ENCODE measurements at regions of chr7 and their contacts with region 1.

Region 1: GRCh38 chr7:102390697-102391484 is 5.3 kb upstream of the PRKRIP1 start:
- H3K4me3 Mint-ChIP-seq: no peak overlapping the region
- H3K27ac Mint-ChIP-seq: no peak overlapping the region
- H3K4me1 Mint-ChIP-seq: peaks cover 6% of the 10 kb centered on the region
- H3K27me3 Mint-ChIP-seq: no peaks in the 10 kb centered on the region

Region 2: GRCh38 chr7:102195361-102196036 is 195.4 kb before region 1 on chr7:
- intact Hi-C with region 1: no loop called
- H3K4me3 Mint-ChIP-seq: no peak overlapping the region
- H3K27ac Mint-ChIP-seq: no peak overlapping the region
- H3K4me1 Mint-ChIP-seq: peaks cover 9% of the 10 kb centered on the region
- H3K27me3 Mint-ChIP-seq: no peaks in the 10 kb centered on the region

Region 3: DNA sequence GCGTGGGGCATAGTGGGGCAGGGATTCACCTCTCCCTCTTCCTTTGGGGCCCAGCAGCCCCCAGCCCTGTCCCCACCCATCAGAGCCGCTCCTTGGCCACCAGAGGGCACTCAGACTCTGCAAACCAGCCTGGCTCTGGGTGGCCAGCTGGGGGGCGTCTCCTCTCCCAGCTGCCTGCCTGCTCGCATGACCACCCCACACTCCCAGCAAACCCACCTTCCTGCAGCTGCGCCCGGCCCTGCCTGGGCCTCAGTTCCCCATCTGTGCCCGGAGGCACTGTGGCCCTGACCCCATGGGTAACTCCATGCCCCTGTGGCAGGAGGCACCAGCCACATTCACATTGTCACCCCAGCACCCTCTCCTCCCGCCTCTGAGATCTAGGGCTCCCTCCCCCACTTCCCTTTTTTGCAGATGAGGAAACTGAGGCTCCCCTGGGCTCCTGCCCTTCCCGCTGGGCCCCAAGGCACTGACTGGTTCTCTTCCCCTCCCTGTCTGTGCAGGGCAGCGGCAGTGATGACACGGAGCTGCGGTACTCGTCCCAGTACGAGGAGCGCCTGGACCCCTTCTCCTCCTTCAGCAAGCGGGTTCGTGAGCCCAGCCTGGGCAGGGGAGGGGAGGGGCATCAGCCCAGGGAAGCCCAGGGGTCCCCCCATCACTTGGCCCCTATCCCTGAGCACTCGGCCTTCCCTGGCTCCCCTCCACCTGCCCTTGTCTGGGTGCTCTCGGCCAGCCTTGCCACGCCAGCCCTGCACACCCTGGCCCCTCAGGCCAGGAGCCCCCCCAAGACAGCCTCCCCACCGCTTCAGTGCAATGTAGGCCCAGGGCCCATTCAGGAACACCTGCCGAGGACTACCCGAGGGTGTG is 111.1 kb before region 1 on chr7:
- intact Hi-C with region 1: loop called (anchors 1 kb)
- H3K4me3 Mint-ChIP-seq: peak overlapping the region; percentile 35
- H3K27ac Mint-ChIP-seq: no peak overlapping the region
- H3K4me1 Mint-ChIP-seq: peaks cover 27% of the 10 kb centered on the region
- H3K27me3 Mint-ChIP-seq: peaks cover 3% of the 10 kb centered on the region

Measured in dendritic cell treated with granulocyte-macrophage colony-stimulating factor and Interleukin-4, amounts not matched to agents 40 ng/mL and 50 ng/mL, for 4 days (primary cell).